ENCODE measurements at regions of chr6 and their contacts with region 1.

Region 1: GRCh38 chr6:13908955-13909381 is 15.8 kb upstream of the RNF182 start:
- DNase-seq: peak; percentile 76
- CTCF ChIP-seq: peak; percentile 71

Region 2: DNA sequence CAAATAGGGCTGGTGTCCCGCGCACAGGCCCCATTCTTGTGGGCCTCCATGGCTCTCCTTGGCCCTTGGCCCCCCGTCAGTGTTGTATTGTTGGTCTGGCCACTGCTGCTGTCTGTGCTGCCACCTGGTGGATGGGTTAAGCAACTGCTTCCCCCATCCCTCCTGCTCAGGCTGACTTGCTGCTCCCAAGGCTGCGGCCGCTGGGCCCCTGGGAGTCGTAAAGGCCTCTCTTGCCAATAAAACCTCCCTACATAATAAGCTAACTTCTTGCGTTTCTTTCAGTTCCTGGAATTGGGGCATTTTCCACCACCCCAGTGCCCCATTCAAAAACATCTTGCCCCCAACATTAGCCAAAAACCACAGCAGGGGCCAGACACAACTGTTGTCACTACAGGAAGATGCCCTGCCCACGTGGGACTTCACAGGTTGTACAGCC is 235.7 kb after region 1 on chr6:
- in situ Hi-C with region 1: loop called (anchors 10 kb)
- DNase-seq: peak; percentile 83
- CTCF ChIP-seq: peak; percentile 96